ENCODE measurements at regions of chr2 and their contacts with region 1.

Region 1: GRCh38 chr2:72862239-72862988 is 24.8 kb upstream of the SPR start:
- DNase-seq: peak; percentile 84 to 93 (median 89)
- H3K4me3 ChIP-seq: peak overlapping the region in 2 of 4 donors; percentile 12 to 19
- H3K27ac ChIP-seq: no peak overlapping the region
- H3K4me1 ChIP-seq: peaks cover 5 to 10% of the 10 kb centered on the region in 2 donors
- H3K27me3 ChIP-seq: no peaks in the 10 kb centered on the region
- CTCF ChIP-seq: peak; percentile 91 to 99 (median 96)
- POLR2A ChIP-seq: no peak

Region 2: GRCh38 chr2:72719416-72719815 is 143.0 kb before region 1 on chr2:
- intact Hi-C with region 1: no loop called
- DNase-seq: no peak
- H3K4me3 ChIP-seq: no peak overlapping the region
- H3K27ac ChIP-seq: no peak overlapping the region
- H3K4me1 ChIP-seq: peaks cover 8 to 42% of the 10 kb centered on the region in 2 donors
- H3K27me3 ChIP-seq: no peaks in the 10 kb centered on the region
- CTCF ChIP-seq: no peak
- POLR2A ChIP-seq: no peak

Region 3: GRCh38 chr2:72770879-72771461 is 91.4 kb before region 1 on chr2:
- intact Hi-C with region 1: loop called (anchors 2 to 5 kb)
- DNase-seq: peak; percentile 47 to 84 (median 79)
- H3K4me3 ChIP-seq: no peak overlapping the region
- H3K27ac ChIP-seq: no peak overlapping the region
- H3K4me1 ChIP-seq: peaks cover 0 to 7% of the 10 kb centered on the region in 2 donors
- H3K27me3 ChIP-seq: no peaks in the 10 kb centered on the region
- CTCF ChIP-seq: peak; percentile 79 to 93 (median 92)
- POLR2A ChIP-seq: no peak

Region 4: GRCh38 chr2:72793798-72794440 is 68.5 kb before region 1 on chr2:
- intact Hi-C with region 1: loop called in 1 of 2 experiments (anchors 10 kb)
- DNase-seq: peak in 1 of 7 donors; percentile 4
- H3K4me3 ChIP-seq: no peak overlapping the region
- H3K27ac ChIP-seq: no peak overlapping the region
- H3K4me1 ChIP-seq: peaks cover 0 to 24% of the 10 kb centered on the region in 2 donors
- H3K27me3 ChIP-seq: no peaks in the 10 kb centered on the region
- CTCF ChIP-seq: no peak
- POLR2A ChIP-seq: no peak